MCF 10A (cell line): ENCODE measurements at regions of chr11 and their contacts with region 1.

Region 1: DNA sequence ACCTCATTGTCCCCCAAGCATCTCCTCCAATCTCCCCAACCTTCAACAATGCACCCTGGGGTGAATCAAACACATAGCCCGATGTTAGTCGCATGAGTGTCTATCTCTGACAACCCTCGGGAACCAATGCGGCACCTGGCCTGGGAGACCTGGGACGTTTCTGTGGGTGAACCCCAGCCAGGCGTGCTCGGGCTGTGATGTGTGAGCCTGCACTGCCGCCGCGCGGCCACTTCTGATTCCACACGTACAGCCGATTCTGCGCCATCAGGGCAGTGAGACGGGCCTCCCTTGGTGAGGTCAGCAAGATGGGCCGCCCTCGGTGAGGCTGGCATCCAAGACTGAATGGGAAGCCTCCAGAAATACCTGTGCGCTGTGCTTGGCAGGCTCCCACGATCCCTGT is 5.2 kb upstream of the H19 start:
- DNase-seq: no peak
- H3K4me3 Mint-ChIP-seq: no peak overlapping the region
- H3K27ac Mint-ChIP-seq: no peak overlapping the region
- H3K4me1 Mint-ChIP-seq: no peaks in the 10 kb centered on the region
- H3K27me3 Mint-ChIP-seq: no peaks in the 10 kb centered on the region
- CTCF ChIP-seq: no peak

Region 2: GRCh38 chr11:1876361-1877063 is 126.3 kb before region 1 on chr11:
- CTCF ChIA-PET with region 1: interaction called, 15 read pairs
- POLR2A ChIA-PET with region 1: no interaction called
- intact Hi-C with region 1: no loop called
- DNase-seq: peak; percentile 80
- H3K4me3 Mint-ChIP-seq: peak overlapping the region; percentile 73
- H3K27ac Mint-ChIP-seq: peak overlapping the region; percentile 83
- H3K4me1 Mint-ChIP-seq: peaks cover 29% of the 10 kb centered on the region
- H3K27me3 Mint-ChIP-seq: no peaks in the 10 kb centered on the region
- CTCF ChIP-seq: peak; percentile 62